ENCODE measurements at regions of chr7 and their contacts with region 1.

Region 1: DNA sequence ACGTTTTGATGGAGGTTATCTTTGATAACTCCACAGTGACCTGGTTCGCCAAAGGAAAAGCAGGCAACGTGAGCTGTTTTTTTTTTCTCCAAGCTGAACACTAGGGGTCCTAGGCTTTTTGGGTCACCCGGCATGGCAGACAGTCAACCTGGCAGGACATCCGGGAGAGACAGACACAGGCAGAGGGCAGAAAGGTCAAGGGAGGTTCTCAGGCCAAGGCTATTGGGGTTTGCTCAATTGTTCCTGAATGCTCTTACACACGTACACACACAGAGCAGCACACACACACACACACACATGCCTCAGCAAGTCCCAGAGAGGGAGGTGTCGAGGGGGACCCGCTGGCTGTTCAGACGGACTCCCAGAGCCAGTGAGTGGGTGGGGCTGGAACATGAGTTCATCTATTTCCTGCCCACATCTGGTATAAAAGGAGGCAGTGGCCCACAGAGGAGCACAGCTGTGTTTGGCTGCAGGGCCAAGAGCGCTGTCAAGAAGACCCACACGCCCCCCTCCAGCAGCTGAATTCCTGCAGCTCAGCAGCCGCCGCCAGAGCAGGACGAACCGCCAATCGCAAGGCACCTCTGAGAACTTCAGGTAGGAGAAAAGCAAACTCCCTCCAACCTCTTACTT is at the start of gene SERPINE1:
- DNase-seq: peak; percentile 99
- H3K4me3 ChIP-seq: peak within 1 kb of the TSS; percentile 60 to 76 (median 66)
- H3K27ac ChIP-seq: peak within 1 kb of the TSS; percentile 85
- H3K4me1 ChIP-seq: peaks cover 47% of the 10 kb centered on the region
- H3K27me3 ChIP-seq: no peaks in the 10 kb centered on the region
- CTCF ChIP-seq: peak in 1 of 2 donors; percentile 22
- total RNA-seq, gene SERPINE1: 429 to 467 TPM

Region 2: GRCh38 chr7:101085162-101085987 is 41.4 kb before region 1 on chr7 and contains the start of gene TRIM56:
- CTCF ChIA-PET with region 1: no interaction called
- dilution Hi-C with region 1: loop called (anchors 5 kb)
- in situ Hi-C with region 1: no loop called
- intact Hi-C with region 1: loop called (anchors 1 kb)
- DNase-seq: peak; percentile 100
- H3K4me3 ChIP-seq: peak within 1 kb of the TSS; percentile 60 to 87 (median 66)
- H3K27ac ChIP-seq: peak within 1 kb of the TSS; percentile 91
- H3K4me1 ChIP-seq: peaks cover 22% of the 10 kb centered on the region
- H3K27me3 ChIP-seq: no peaks in the 10 kb centered on the region
- CTCF ChIP-seq: no peak
- total RNA-seq, gene TRIM56: 16.3 to 30.8 TPM

Region 3: DNA sequence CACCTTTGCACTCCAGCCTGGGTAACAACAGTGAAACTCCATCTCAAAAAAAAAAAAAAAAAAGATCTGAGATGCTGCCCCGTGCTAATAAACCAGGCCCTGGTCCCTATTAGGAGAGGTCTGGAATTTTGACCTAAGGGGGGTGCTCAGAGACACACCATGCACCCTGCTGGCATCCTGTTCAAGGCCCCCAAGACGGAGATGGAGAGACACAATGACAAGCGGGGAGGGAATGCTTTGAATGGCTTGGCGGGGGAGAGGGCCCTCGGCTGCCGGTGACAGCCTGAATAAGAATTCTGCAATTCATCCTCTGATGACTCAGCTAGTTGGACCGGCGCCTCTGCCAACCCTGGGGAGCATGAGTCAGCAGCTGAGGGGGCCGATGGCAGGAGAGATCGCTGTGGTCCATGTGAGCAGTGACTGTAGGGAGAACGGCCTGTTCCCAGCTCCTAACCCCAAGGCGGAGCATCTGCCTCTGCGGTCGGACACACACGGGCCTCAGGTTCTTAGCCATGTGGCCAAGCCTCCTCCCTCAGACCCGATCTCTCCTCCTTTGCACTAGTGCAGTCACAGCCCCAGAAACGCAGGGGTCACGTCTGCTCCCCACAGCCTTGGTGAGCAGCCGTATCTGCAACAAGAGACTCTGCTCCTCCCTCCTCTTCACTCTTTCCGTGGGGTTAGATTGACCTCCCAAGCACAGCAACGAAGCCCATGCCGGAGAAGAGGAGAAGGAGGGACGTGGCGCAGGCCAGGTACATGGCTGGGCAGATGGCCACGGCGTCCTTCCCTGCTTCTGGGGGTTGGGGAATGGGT is 26.6 kb before region 1 on chr7:
- CTCF ChIA-PET with region 1: interaction called, 3 read pairs
- dilution Hi-C with region 1: no loop called
- in situ Hi-C with region 1: no loop called
- intact Hi-C with region 1: loop called (anchors 1 kb)
- DNase-seq: peak; percentile 98
- H3K4me3 ChIP-seq: no peak overlapping the region
- H3K27ac ChIP-seq: peak overlapping the region; percentile 75
- H3K4me1 ChIP-seq: peaks cover 30% of the 10 kb centered on the region
- H3K27me3 ChIP-seq: no peaks in the 10 kb centered on the region
- CTCF ChIP-seq: no peak

Region 4: GRCh38 chr7:101108962-101109759 is 17.6 kb before region 1 on chr7:
- CTCF ChIA-PET with region 1: interaction called, 3 read pairs
- dilution Hi-C with region 1: no loop called
- in situ Hi-C with region 1: no loop called
- intact Hi-C with region 1: loop called (anchors 1 kb)
- DNase-seq: peak; percentile 98
- H3K4me3 ChIP-seq: no peak overlapping the region
- H3K27ac ChIP-seq: peak overlapping the region; percentile 87
- H3K4me1 ChIP-seq: peaks cover 23% of the 10 kb centered on the region
- H3K27me3 ChIP-seq: no peaks in the 10 kb centered on the region
- CTCF ChIP-seq: no peak

Region 5: GRCh38 chr7:101235050-101235449 is 108.3 kb after region 1 on chr7:
- CTCF ChIA-PET with region 1: no interaction called
- dilution Hi-C with region 1: no loop called
- in situ Hi-C with region 1: no loop called
- intact Hi-C with region 1: no loop called
- DNase-seq: no peak
- H3K4me3 ChIP-seq: no peak overlapping the region
- H3K27ac ChIP-seq: no peak overlapping the region
- H3K4me1 ChIP-seq: peaks cover 11% of the 10 kb centered on the region
- H3K27me3 ChIP-seq: no peaks in the 10 kb centered on the region
- CTCF ChIP-seq: peak; percentile 13 to 41

Measured in mammary epithelial cell (primary cell).